Adrenal gland (tissue), 19 donors: ENCODE measurements at regions of chr11 and their contacts with region 1.

Region 1: DNA sequence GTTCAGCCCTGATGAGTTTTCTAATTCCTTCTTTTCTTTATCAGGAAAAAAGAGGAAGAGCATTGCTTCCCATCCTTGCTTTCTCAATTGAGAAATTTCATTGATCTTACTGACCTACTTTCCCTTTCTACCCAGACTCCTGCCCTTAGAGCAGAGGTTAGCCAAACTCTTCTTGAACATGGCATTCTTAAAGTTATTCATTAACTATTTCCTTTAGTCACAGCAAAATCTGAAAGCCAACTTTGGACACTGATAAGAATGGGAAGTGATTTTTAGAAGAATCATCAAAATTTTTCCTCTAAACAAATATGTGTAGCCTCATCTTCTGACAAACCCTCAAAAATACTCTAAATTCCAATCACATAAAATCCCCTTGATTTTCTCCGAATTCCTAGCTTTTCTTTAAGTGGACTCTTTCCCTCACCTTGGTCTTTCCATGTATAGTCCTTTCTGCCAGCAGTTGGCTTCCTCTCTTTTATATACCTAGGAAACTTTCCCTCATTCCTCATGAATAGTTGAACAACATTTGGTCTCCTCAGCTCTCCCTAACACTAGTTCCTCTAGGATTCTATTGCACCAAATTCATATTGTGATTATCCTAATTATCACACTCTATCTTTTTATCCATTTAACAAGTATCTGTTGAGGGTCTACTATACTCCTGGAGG is 566.7 kb upstream of the CCDC90B start:
- DNase-seq: no peak
- H3K4me3 ChIP-seq: no peak overlapping the region
- H3K27ac ChIP-seq: no peak overlapping the region
- H3K4me1 ChIP-seq: peaks cover 0 to 17% of the 10 kb centered on the region in 2 donors
- H3K27me3 ChIP-seq: no peaks in the 10 kb centered on the region
- CTCF ChIP-seq: no peak
- POLR2A ChIP-seq: no peak

Region 2: DNA sequence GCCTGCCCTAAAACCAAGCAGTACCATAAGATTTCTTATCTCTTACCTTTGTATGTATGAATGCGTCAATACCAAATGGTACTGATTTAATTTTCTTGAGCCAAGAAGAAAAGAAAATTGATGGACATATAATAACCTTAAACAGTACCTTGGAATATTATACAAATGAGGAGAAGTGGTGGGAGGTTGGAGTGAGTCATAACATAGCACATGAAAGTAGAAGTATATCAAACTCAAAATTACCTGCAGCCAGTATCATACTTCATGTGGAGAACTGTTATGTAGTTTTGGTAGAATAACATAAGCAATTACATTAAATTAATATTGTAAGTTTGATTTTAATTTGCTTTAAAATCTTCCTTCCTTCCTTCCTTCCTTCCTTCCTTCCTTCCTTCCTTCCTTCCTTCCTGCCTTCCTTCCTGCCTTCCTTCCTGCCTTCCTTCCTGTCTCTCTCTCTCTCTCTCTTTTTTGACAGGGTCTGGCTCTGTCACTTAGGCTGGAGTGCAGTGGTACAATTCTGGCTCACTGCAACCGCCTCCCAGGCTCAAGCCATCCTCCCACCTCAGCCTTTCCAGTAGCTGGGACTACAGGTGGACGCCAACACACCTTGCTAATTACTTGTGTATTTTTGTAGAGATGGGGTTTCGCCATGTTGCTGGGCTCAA is 105.9 kb before region 1 on chr11:
- intact Hi-C with region 1: no loop called
- DNase-seq: no peak
- H3K4me3 ChIP-seq: no peak overlapping the region
- H3K27ac ChIP-seq: no peak overlapping the region
- H3K4me1 ChIP-seq: no peaks in the 10 kb centered on the region
- H3K27me3 ChIP-seq: no peaks in the 10 kb centered on the region
- CTCF ChIP-seq: no peak
- POLR2A ChIP-seq: no peak

Region 3: GRCh38 chr11:83921447-83922192 is 68.7 kb after region 1 on chr11:
- intact Hi-C with region 1: loop called in 1 of 2 experiments (anchors 10 kb)
- DNase-seq: no peak
- H3K4me3 ChIP-seq: no peak overlapping the region
- H3K27ac ChIP-seq: no peak overlapping the region
- H3K4me1 ChIP-seq: peaks cover 4 to 11% of the 10 kb centered on the region in 2 donors
- H3K27me3 ChIP-seq: no peaks in the 10 kb centered on the region
- CTCF ChIP-seq: no peak
- POLR2A ChIP-seq: no peak